ENCODE measurements at regions of chr10 and their contacts with region 1.

Region 1: DNA sequence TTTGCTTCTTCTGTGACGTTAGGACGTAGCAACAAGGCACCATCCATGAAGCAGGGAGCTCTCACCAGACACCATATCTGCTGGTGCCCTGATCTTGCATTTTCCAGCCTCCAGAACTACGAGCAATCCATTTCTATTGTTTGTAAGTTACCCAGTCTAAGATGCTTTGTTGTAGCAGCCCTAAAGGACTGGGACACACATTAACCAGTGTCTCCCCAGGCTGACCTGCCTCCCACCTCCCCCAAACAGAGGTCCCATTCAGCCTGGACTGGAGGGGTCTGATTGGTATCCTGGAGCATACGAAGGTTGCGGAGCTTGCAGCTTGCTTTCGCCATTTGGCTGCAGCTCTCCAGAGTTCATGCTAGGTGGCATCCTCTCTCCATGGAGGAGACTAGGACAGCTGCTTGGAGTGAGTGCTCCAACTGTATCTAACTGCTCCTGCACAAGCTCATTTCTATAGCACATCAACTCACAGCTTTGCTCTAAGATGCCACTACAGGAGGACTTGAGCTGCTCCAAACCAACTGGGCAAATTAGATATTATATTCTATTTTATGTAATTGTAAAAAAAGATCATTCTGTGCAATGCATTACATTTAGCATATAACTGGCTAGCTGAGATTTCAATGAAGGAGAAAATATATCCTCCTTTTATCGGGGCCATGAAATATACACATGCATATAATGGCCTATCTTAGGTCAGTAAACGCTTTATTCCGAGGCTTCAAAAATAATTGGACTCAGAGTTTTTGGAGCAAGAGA is 8.0 kb upstream of the GRK5 start:
- DNase-seq: peak; percentile 46 to 94 (median 78)

Region 2: GRCh38 chr10:119445311-119445934 is 246.0 kb after region 1 on chr10:
- intact Hi-C with region 1: loop called (anchors 5 kb)
- DNase-seq: peak; percentile 77 to 96 (median 90)

Measured in head of caudate nucleus (tissue), 42 donors.